ENCODE measurements at regions of chr2 and their contacts with region 1.

Region 1: GRCh38 chr2:120680136-120680761 is 55.4 kb upstream of the GLI2 start:
- DNase-seq: peak; percentile 39 to 85 (median 70)
- ATAC-seq: peak; percentile 73
- H3K4me3 ChIP-seq: no peak overlapping the region
- H3K4me3 Mint-ChIP-seq: no peak overlapping the region
- H3K27ac ChIP-seq: no peak overlapping the region
- H3K27ac Mint-ChIP-seq: peak overlapping the region; percentile 14
- H3K4me1 ChIP-seq: no peaks in the 10 kb centered on the region
- H3K4me1 Mint-ChIP-seq: peaks cover 2% of the 10 kb centered on the region
- H3K27me3 ChIP-seq: no peaks in the 10 kb centered on the region
- H3K27me3 Mint-ChIP-seq: peaks cover 23% of the 10 kb centered on the region
- CTCF ChIP-seq: no peak

Region 2: DNA sequence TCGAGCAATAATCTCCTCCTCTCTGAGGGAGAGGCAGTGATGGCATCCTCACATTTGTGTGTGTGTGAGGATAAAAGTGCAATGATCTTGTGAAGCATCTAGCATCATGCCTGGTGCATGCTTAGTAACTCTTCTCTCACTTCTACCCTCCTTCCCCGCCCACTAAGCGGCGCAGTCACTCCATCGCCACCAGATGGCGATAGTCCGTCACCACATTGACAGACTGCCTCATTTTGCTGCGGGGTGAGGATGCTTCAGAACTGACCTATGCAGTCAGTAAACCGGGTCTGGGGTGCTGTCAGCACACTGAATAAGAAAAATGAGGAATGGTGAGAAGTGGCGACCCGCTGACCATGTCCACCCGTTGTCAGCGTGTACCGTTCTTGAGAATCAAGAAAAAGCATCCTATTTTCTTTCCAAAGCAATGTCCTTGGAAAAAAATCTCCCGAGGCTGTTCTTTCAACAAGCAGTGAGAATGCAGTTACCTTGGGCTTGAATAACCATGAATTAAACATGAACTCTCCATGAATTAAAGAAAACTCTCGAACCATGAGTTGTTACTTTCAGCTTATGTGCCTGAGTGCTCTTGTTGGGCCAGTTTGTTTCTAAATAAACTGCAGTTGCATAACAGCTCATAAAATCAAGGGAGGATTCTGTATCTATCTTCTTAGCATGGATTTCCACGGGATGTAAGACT is 1038.5 kb before region 1 on chr2:
- CTCF ChIA-PET with region 1: interaction called, 21 read pairs
- POLR2A ChIA-PET with region 1: no interaction called
- intact Hi-C with region 1: loop called in 1 of 2 experiments (anchors 2 kb)
- DNase-seq: peak; percentile 49 to 82 (median 69)
- ATAC-seq: peak; percentile 92
- H3K4me3 ChIP-seq: no peak overlapping the region
- H3K4me3 Mint-ChIP-seq: no peak overlapping the region
- H3K27ac ChIP-seq: no peak overlapping the region
- H3K27ac Mint-ChIP-seq: no peak overlapping the region
- H3K4me1 ChIP-seq: no peaks in the 10 kb centered on the region
- H3K4me1 Mint-ChIP-seq: peaks cover 2% of the 10 kb centered on the region
- H3K27me3 ChIP-seq: no peaks in the 10 kb centered on the region
- H3K27me3 Mint-ChIP-seq: peaks cover 10% of the 10 kb centered on the region
- CTCF ChIP-seq: peak; percentile 95

Region 3: DNA sequence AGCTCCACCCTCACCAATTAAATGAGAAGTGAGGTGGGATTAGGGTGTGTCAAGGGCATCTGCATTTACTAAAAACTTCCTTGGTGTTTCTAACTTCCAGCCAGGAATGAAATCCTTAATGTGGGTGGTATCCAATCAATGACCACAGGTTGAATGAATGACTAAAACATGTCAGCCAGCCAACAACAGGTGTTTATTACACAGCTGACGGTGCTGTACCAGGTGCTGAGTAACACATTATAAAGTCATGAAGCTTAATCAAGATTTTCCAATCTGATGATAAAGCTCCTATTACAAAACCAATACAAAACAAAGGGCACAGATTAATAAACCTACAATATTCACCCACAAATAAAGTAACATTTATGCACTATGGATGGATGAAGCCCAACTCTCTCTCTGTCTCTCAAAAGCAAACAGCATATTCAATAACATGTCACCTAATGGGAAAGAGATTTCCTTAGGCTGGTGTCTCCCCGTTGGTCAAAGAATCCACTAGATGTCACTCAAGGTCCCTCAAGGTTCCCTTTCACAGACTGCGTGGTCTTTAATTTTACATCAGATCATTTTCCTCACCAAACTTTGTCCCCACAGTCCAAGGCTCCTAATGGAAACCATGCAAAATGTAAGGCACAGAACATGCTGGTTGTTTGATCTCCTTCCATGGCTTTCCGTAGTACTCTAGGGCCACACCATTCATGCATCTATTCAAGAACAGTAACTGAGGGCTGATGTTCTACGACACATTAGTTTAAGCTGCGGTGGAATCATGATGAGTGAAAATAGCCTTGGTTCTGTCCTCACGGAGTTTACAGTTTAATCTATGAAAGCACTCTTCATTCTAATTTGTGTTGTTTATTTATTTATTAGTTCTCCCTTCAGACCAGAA is 927.0 kb before region 1 on chr2:
- CTCF ChIA-PET with region 1: interaction called, 8 read pairs
- POLR2A ChIA-PET with region 1: no interaction called
- intact Hi-C with region 1: loop called in 1 of 2 experiments (anchors 2 kb)
- DNase-seq: peak in 8 of 9 experiments; percentile 7 to 79 (median 33)
- ATAC-seq: peak; percentile 92
- H3K4me3 ChIP-seq: no peak overlapping the region
- H3K4me3 Mint-ChIP-seq: no peak overlapping the region
- H3K27ac ChIP-seq: no peak overlapping the region
- H3K27ac Mint-ChIP-seq: no peak overlapping the region
- H3K4me1 ChIP-seq: no peaks in the 10 kb centered on the region
- H3K4me1 Mint-ChIP-seq: peaks cover 5% of the 10 kb centered on the region
- H3K27me3 ChIP-seq: no peaks in the 10 kb centered on the region
- H3K27me3 Mint-ChIP-seq: no peaks in the 10 kb centered on the region
- CTCF ChIP-seq: peak; percentile 81

Region 4: DNA sequence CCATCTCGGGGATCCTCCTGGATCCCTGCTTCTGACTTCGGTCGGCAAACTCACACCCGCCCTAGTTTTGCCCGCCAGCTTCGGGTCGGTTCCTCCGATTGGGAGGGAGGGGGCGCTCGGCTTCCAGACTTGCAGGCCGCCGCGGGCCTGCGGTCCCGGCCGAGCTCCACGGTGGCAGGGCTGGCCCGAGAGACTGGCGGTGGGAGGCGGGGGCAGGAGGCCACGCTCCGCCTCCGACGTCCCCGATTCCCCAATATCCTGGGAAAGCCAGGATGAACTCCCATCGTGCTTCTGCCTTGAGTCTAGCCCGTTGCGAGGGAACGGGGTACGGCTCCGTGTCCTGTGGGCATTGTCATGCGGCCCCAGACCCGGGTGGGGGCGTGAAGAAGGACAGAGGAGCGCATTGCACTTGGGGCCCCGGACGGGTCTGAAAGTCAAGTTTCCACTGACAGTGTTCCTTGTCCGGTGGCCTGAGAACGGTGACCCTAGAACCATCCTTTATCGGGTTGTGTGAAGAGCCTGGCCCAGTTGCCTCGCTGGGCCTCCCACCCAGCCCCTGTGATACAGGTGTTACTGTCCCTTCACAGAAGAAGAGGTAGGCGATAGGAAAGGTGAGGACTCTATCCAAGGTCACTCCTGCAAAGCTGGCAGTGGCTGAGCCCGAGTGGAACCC is 336.7 kb before region 1 on chr2:
- CTCF ChIA-PET with region 1: interaction called, 12 read pairs
- POLR2A ChIA-PET with region 1: no interaction called
- intact Hi-C with region 1: loop called in 1 of 2 experiments (anchors 2 kb)
- DNase-seq: peak; percentile 9 to 66 (median 47)
- ATAC-seq: peak; percentile 45
- H3K4me3 ChIP-seq: no peak overlapping the region
- H3K4me3 Mint-ChIP-seq: peak overlapping the region; percentile 73
- H3K27ac ChIP-seq: no peak overlapping the region
- H3K27ac Mint-ChIP-seq: no peak overlapping the region
- H3K4me1 ChIP-seq: peaks cover 20% of the 10 kb centered on the region
- H3K4me1 Mint-ChIP-seq: peaks cover 25% of the 10 kb centered on the region
- H3K27me3 ChIP-seq: peaks cover 22 to 28% of the 10 kb centered on the region in 2 experiments
- H3K27me3 Mint-ChIP-seq: peaks cover 56% of the 10 kb centered on the region
- CTCF ChIP-seq: peak; percentile 44

Region 5: GRCh38 chr2:121018136-121019061 is 338.1 kb after region 1 on chr2:
- CTCF ChIA-PET with region 1: no interaction called
- POLR2A ChIA-PET with region 1: no interaction called
- intact Hi-C with region 1: no loop called
- DNase-seq: no peak
- ATAC-seq: no peak
- H3K4me3 ChIP-seq: no peak overlapping the region
- H3K4me3 Mint-ChIP-seq: no peak overlapping the region
- H3K27ac ChIP-seq: no peak overlapping the region
- H3K27ac Mint-ChIP-seq: no peak overlapping the region
- H3K4me1 ChIP-seq: no peaks in the 10 kb centered on the region
- H3K4me1 Mint-ChIP-seq: no peaks in the 10 kb centered on the region
- H3K27me3 ChIP-seq: no peaks in the 10 kb centered on the region
- H3K27me3 Mint-ChIP-seq: peaks cover 4% of the 10 kb centered on the region
- CTCF ChIP-seq: no peak

Region 6: DNA sequence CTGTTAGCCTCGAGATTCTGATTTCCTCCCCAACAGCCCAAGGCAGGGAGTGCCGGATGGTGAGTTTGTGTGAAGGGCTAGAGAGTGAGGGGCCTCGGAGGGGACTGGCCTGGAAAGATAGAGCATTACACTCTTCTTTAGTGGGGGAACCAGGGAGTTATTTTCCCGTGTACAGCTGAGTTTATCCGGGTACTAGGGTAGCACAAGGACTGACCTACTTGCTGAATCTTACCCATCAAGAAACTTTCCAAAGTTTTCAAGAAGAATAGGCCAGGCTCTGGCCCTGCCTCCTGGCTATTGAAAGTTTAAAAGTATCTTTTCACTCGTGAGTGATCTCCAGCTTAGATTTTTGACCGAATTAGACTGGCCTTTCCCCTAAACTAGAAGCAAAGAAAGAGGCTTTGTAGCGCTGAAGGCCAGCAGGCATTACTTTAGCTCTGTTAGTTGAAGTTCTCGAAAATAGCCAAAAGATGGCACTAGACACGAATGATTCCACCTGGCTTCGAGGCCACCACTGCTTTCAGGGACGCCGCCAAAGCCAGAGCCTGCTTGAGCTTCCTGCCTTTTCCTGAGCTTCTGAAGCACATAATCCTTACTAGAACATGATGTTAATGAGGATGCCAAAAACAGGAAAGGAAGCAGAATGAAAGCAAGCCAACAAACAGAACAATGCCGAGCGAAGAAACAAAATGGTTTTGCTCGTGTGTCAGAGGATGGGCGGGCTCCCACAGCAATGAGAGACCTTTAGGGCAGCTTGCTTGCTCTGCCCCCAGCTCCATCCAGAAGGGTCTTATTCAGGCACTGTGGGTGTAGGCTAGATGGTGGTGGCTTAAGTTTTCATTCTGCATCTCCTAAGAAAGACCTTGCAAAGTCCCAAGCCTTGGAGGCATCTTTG is 1131.0 kb after region 1 on chr2:
- CTCF ChIA-PET with region 1: no interaction called
- POLR2A ChIA-PET with region 1: no interaction called
- intact Hi-C with region 1: no loop called
- DNase-seq: peak in 2 of 9 experiments; percentile 10 to 14
- ATAC-seq: no peak
- H3K4me3 ChIP-seq: no peak overlapping the region
- H3K4me3 Mint-ChIP-seq: no peak overlapping the region
- H3K27ac ChIP-seq: no peak overlapping the region
- H3K27ac Mint-ChIP-seq: no peak overlapping the region
- H3K4me1 ChIP-seq: no peaks in the 10 kb centered on the region
- H3K4me1 Mint-ChIP-seq: no peaks in the 10 kb centered on the region
- H3K27me3 ChIP-seq: no peaks in the 10 kb centered on the region
- H3K27me3 Mint-ChIP-seq: peaks cover 13% of the 10 kb centered on the region
- CTCF ChIP-seq: peak; percentile 15

Measured in CD8-positive, alpha-beta T cell (primary cell).